ENCODE measurements at regions of chr3 and their contacts with region 1.

Region 1: DNA sequence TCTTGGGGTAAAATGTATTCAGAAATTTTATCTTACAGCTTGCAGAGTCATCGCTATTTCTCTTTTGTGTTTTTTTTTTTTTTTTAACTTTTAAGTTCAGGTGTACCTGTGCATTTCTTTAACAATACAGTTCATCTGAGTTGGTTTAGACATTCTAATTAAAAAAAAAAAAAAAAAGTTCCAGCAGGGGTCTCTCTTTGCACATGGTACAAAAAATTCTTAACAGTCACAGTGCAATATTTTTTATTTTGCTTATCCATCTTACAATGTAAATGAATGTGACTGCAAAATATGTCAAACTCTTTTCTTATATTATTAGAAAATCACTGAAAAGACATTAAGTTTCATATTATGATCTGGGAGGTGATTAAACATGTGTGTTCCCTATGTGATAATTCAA is 47.5 kb upstream of the SLC9A9 start:
- DNase-seq: no peak
- ATAC-seq: 0 out of 3 replicates have a peak, but pooled peaks have one; percentile 35
- H3K4me3 ChIP-seq: no peak overlapping the region
- H3K27ac ChIP-seq: no peak overlapping the region
- H3K4me1 ChIP-seq: no peaks in the 10 kb centered on the region
- H3K27me3 ChIP-seq: 0 out of 4 replicates have a peak, but pooled peaks cover 0 to 2% of the 10 kb centered on the region in 2 experiments
- CTCF ChIP-seq: no peak; a peak in 1 of 6 replicates
- EP300 ChIP-seq: no peak
- POLR2A ChIP-seq: no peak
- RAD21 ChIP-seq: peak; percentile 64

Region 2: GRCh38 chr3:143565951-143566350 is 329.9 kb before region 1 on chr3:
- CTCF ChIA-PET with region 1: no interaction called
- POLR2A ChIA-PET with region 1: no interaction called
- RAD21 ChIA-PET with region 1: no interaction called
- SMC1A ChIA-PET with region 1: no interaction called
- in situ Hi-C with region 1: no loop called
- intact Hi-C with region 1: no loop called
- DNase-seq: no peak
- ATAC-seq: no peak
- H3K4me3 ChIP-seq: no peak overlapping the region
- H3K27ac ChIP-seq: no peak overlapping the region
- H3K4me1 ChIP-seq: no peaks in the 10 kb centered on the region
- H3K27me3 ChIP-seq: no peaks in the 10 kb centered on the region
- CTCF ChIP-seq: no peak
- EP300 ChIP-seq: no peak
- POLR2A ChIP-seq: no peak
- RAD21 ChIP-seq: no peak

Region 3: GRCh38 chr3:143951351-143951971 is 55.7 kb after region 1 on chr3:
- CTCF ChIA-PET with region 1: interaction called, 11 read pairs
- POLR2A ChIA-PET with region 1: no interaction called
- RAD21 ChIA-PET with region 1: interaction called, 4 read pairs
- SMC1A ChIA-PET with region 1: no interaction called
- in situ Hi-C with region 1: loop called (anchors 10 kb)
- intact Hi-C with region 1: loop called (anchors 2 kb)
- DNase-seq: no peak
- ATAC-seq: peak; percentile 78
- H3K4me3 ChIP-seq: no peak overlapping the region
- H3K27ac ChIP-seq: no peak overlapping the region
- H3K4me1 ChIP-seq: no peaks in the 10 kb centered on the region
- H3K27me3 ChIP-seq: no peaks in the 10 kb centered on the region
- CTCF ChIP-seq: peak; percentile 63 to 74 (median 65)
- EP300 ChIP-seq: no peak
- POLR2A ChIP-seq: no peak
- RAD21 ChIP-seq: peak; percentile 77

Region 4: GRCh38 chr3:144028798-144029411 is 133.1 kb after region 1 on chr3:
- CTCF ChIA-PET with region 1: no interaction called
- POLR2A ChIA-PET with region 1: no interaction called
- RAD21 ChIA-PET with region 1: no interaction called
- SMC1A ChIA-PET with region 1: no interaction called
- in situ Hi-C with region 1: no loop called
- intact Hi-C with region 1: no loop called
- DNase-seq: peak; percentile 72
- ATAC-seq: peak; percentile 93
- H3K4me3 ChIP-seq: no peak overlapping the region
- H3K27ac ChIP-seq: peak overlapping the region; percentile 77
- H3K4me1 ChIP-seq: peaks cover 33% of the 10 kb centered on the region
- H3K27me3 ChIP-seq: no peaks in the 10 kb centered on the region
- CTCF ChIP-seq: peak in 1 of 3 experiments; percentile 24; a peak in 1 of 6 replicates
- EP300 ChIP-seq: peak; percentile 86 to 99
- POLR2A ChIP-seq: no peak
- RAD21 ChIP-seq: no peak

Region 5: DNA sequence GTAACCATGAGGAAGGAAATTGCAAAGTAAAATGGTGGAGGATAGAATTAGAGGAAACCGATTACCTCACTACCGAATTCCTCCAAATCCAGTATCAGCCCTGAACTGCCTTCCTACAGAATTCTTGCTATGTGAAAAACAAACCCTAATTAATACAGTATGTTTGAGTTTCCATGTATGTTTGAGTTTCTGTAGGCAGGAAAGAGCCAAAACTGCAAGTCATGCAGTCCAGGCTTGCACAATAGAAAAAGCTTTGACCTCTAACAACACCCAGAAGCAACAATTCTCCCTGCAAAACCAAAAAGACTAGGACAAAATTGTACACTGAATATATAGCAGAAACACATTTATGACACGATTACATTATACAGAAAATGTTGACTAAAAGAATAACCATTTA is 690.6 kb after region 1 on chr3:
- CTCF ChIA-PET with region 1: no interaction called
- POLR2A ChIA-PET with region 1: no interaction called
- RAD21 ChIA-PET with region 1: no interaction called
- SMC1A ChIA-PET with region 1: no interaction called
- in situ Hi-C with region 1: no loop called
- intact Hi-C with region 1: loop called (anchors 10 kb)
- DNase-seq: no peak
- ATAC-seq: no peak
- H3K4me3 ChIP-seq: no peak overlapping the region
- H3K27ac ChIP-seq: no peak overlapping the region
- H3K4me1 ChIP-seq: no peaks in the 10 kb centered on the region
- H3K27me3 ChIP-seq: no peaks in the 10 kb centered on the region
- CTCF ChIP-seq: no peak
- EP300 ChIP-seq: no peak
- POLR2A ChIP-seq: no peak
- RAD21 ChIP-seq: no peak

Region 6: GRCh38 chr3:144770915-144771351 is 875.1 kb after region 1 on chr3:
- CTCF ChIA-PET with region 1: no interaction called
- POLR2A ChIA-PET with region 1: no interaction called
- RAD21 ChIA-PET with region 1: no interaction called
- SMC1A ChIA-PET with region 1: no interaction called
- in situ Hi-C with region 1: no loop called
- intact Hi-C with region 1: loop called (anchors 10 kb)
- DNase-seq: no peak
- ATAC-seq: peak; percentile 62
- H3K4me3 ChIP-seq: no peak overlapping the region
- H3K27ac ChIP-seq: no peak overlapping the region
- H3K4me1 ChIP-seq: no peaks in the 10 kb centered on the region
- H3K27me3 ChIP-seq: no peaks in the 10 kb centered on the region
- CTCF ChIP-seq: peak in 2 of 3 experiments; percentile 21 to 32; a peak in 2 of 6 replicates
- EP300 ChIP-seq: no peak
- POLR2A ChIP-seq: no peak
- RAD21 ChIP-seq: peak; percentile 61

Measured in GM12878 (cell line).